ENCODE measurements at regions of chr12 and their contacts with region 1.

Region 1: DNA sequence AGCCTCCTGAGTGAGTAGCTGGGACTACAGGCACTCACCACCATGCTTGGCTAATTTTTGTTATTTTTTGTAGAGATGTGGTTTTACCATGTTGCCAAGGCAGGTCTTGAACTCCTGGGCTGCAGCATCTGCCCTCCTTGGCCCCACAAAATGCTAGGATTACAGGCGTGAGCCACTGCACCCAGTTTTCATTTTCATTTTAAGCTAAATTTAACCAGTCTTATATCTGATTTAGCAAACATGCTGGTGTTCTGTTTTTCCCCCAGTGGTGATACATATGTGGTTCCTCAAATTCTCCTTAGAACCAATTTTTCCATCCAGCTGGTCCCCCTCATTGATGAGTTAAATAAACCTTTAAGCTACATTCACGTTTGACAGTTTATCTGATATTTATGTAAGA is 43.8 kb upstream of the BICD1 start:
- DNase-seq: no peak
- H3K4me3 ChIP-seq: no peak overlapping the region
- H3K27ac ChIP-seq: no peak overlapping the region
- H3K4me1 ChIP-seq: no peaks in the 10 kb centered on the region
- H3K27me3 ChIP-seq: peaks cover 0 to 2% of the 10 kb centered on the region in 2 experiments
- CTCF ChIP-seq: no peak
- POLR2A ChIP-seq: no peak

Region 2: DNA sequence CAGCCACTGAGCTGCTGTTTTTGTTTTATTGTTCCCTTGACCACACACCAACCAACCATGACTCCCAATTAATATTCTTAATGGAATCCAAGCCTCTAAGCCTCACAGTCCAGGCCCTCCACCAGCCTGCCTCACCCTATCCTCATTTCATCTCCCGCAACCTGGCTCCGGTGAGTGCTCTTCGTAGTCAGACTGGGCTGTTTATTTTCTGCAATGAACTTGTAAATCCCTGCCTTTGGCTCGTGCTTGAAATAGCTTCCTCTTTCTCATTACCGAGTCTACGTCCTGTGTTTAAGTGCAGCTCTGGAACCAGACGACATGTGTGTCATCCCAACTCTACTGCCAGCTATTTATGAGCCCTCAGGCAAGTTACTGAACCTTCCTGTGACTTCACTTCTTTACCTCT is 415.8 kb before region 1 on chr12:
- CTCF ChIA-PET with region 1: no interaction called
- POLR2A ChIA-PET with region 1: no interaction called
- dilution Hi-C with region 1: no loop called
- intact Hi-C with region 1: loop called (anchors 2 kb)
- DNase-seq: no peak
- H3K4me3 ChIP-seq: no peak overlapping the region
- H3K27ac ChIP-seq: no peak overlapping the region
- H3K4me1 ChIP-seq: no peaks in the 10 kb centered on the region
- H3K27me3 ChIP-seq: no peaks in the 10 kb centered on the region
- CTCF ChIP-seq: no peak
- POLR2A ChIP-seq: no peak

Region 3: DNA sequence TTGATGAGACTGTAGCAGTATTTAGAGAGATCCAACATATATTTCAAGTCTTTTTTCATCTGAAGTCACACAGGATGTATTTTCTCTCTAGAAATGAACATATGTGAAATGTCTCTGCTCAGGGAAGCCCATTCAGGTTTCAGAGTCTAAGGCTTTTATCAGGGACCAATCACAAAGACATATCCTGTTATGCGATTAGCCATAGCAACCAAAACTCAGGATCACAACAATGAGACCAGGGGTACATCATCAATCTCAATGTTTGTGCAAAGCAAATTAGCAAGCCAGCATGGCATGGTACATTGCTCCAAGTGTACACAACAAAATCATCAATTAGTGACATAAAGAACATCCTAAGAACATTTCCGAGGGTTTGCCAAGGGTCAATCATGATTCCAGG is 234.8 kb before region 1 on chr12:
- CTCF ChIA-PET with region 1: no interaction called
- POLR2A ChIA-PET with region 1: no interaction called
- dilution Hi-C with region 1: no loop called
- intact Hi-C with region 1: no loop called
- DNase-seq: no peak
- H3K4me3 ChIP-seq: no peak overlapping the region
- H3K27ac ChIP-seq: no peak overlapping the region
- H3K4me1 ChIP-seq: no peaks in the 10 kb centered on the region
- H3K27me3 ChIP-seq: no peaks in the 10 kb centered on the region
- CTCF ChIP-seq: no peak
- POLR2A ChIP-seq: no peak

Region 4: DNA sequence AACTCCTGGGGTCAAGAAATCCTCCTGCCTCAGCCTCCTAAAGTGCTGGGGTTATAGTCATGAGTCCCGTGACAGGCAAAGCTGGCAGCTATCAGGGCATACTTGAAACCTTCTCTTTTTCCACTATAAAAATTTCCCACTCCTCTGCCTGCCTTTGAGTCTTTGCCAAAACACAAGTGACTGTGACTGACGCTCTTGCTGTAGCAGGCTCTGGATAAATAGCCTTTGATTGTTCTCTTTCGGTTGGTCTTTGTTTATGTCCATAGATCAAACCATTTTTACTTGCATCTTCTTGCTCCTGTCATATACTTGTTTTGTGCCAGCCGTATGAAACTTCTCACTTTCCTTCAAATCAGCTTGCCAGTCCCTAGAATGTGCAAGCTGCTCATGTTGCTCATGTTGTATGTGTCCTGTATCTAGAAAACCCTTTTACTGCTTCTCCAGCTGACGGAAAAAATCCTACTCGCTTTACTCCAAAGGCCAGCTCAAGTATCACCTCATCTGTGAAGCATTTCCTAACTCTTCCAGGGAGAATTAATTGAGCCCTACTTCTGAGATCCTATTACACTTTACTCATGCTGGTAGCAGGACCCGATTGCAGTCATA is 30.6 kb before region 1 on chr12:
- CTCF ChIA-PET with region 1: interaction called, 5 read pairs
- POLR2A ChIA-PET with region 1: no interaction called
- dilution Hi-C with region 1: no loop called
- intact Hi-C with region 1: loop called (anchors 2 kb)
- DNase-seq: peak; percentile 87
- H3K4me3 ChIP-seq: no peak overlapping the region
- H3K27ac ChIP-seq: no peak overlapping the region
- H3K4me1 ChIP-seq: peaks cover 33% of the 10 kb centered on the region
- H3K27me3 ChIP-seq: no peaks in the 10 kb centered on the region
- CTCF ChIP-seq: no peak
- POLR2A ChIP-seq: no peak

Region 5: GRCh38 chr12:32076941-32077340 is 14.1 kb after region 1 on chr12:
- CTCF ChIA-PET with region 1: interaction called, 12 read pairs
- POLR2A ChIA-PET with region 1: no interaction called
- dilution Hi-C with region 1: no loop called
- intact Hi-C with region 1: no loop called
- DNase-seq: no peak
- H3K4me3 ChIP-seq: no peak overlapping the region
- H3K27ac ChIP-seq: no peak overlapping the region
- H3K4me1 ChIP-seq: no peaks in the 10 kb centered on the region
- H3K27me3 ChIP-seq: peaks cover 2 to 4% of the 10 kb centered on the region in 2 experiments
- CTCF ChIP-seq: no peak
- POLR2A ChIP-seq: no peak

Region 6: GRCh38 chr12:32671930-32672780 is 609.3 kb after region 1 on chr12:
- CTCF ChIA-PET with region 1: no interaction called
- POLR2A ChIA-PET with region 1: no interaction called
- dilution Hi-C with region 1: no loop called
- intact Hi-C with region 1: loop called (anchors 1 kb)
- DNase-seq: peak; percentile 85
- H3K4me3 ChIP-seq: no peak overlapping the region
- H3K27ac ChIP-seq: no peak overlapping the region
- H3K4me1 ChIP-seq: peaks cover 6% of the 10 kb centered on the region
- H3K27me3 ChIP-seq: no peaks in the 10 kb centered on the region
- CTCF ChIP-seq: peak; percentile 45 to 65
- POLR2A ChIP-seq: no peak

Measured in endothelial cell of umbilical vein (primary cell).